ENCODE measurements at regions of chr2 and their contacts with region 1.

Region 1: GRCh38 chr2:172465417-172466334 is 38.3 kb downstream of the ITGA6 start:
- DNase-seq: peak; percentile 72
- H3K4me3 ChIP-seq: peak overlapping the region; percentile 44
- H3K27ac ChIP-seq: no peak overlapping the region
- H3K27me3 ChIP-seq: no peaks in the 10 kb centered on the region
- CTCF ChIP-seq: peak; percentile 86

Region 2: DNA sequence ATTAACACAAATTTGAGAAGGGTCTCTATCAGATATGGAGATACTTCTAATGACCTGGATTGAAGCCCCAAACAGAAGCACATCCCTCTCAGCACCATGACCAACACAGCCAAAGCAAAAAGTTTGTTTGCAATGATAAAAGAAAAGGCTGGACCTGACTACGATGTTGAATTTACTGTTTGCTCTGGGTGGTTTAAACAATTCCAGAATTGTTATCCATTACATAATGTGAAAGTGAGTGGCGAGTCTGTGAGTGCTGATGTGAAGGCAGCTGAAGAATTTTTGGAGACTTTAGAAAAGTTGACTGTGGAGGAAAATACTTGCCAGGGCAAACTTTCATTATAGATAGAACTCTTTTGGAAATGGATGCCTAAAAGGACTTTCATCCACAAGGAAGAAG is 345.6 kb before region 1 on chr2:
- CTCF ChIA-PET with region 1: interaction called, 14 read pairs
- POLR2A ChIA-PET with region 1: no interaction called
- DNase-seq: no peak
- H3K4me3 ChIP-seq: no peak overlapping the region
- H3K27ac ChIP-seq: no peak overlapping the region
- H3K27me3 ChIP-seq: no peaks in the 10 kb centered on the region
- CTCF ChIP-seq: no peak

Region 3: GRCh38 chr2:172179045-172179701 is 286.5 kb before region 1 on chr2:
- CTCF ChIA-PET with region 1: interaction called, 154 read pairs
- POLR2A ChIA-PET with region 1: no interaction called
- DNase-seq: no peak
- H3K4me3 ChIP-seq: no peak overlapping the region
- H3K27ac ChIP-seq: no peak overlapping the region
- H3K27me3 ChIP-seq: no peaks in the 10 kb centered on the region
- CTCF ChIP-seq: no peak

Region 4: DNA sequence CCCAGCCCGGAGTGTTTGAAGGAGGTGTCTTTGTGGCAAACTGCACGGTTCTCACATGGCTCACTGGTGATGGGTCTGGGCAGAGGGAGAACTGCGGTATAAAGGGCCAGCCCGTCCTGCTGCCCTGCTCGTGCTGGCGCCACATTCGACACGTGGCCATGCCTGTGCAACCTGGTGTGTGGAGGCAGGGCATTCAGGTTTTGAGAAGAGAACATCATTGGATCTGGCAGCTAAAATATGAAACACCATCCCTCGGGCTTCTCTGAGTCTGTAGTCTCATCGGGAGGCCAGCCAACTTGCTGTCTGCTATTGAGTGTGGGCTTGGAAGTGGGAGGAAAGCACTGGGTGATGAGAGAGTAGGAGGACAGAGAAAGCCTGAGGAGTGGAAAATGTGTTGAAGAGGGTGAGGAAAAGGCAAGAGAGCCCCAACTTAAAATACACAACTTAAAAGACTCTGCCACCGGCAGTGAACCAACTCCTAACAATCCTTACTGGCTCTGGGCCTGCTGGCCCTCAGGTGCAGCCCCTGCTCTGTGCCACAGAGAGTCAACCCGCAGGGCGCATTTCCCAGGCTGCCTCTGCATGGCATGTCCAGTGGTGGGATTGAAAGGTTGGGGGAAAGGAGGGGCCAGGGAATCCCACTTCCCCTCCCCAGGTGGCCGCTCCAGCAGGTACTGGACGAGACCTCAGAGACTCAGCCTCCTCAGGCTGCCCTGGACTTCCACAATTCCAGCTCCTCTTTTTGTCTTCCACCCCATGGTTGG is 250.3 kb before region 1 on chr2:
- CTCF ChIA-PET with region 1: interaction called, 11 read pairs
- POLR2A ChIA-PET with region 1: no interaction called
- DNase-seq: no peak
- H3K4me3 ChIP-seq: no peak overlapping the region
- H3K27ac ChIP-seq: no peak overlapping the region
- H3K27me3 ChIP-seq: no peaks in the 10 kb centered on the region
- CTCF ChIP-seq: no peak

Region 5: DNA sequence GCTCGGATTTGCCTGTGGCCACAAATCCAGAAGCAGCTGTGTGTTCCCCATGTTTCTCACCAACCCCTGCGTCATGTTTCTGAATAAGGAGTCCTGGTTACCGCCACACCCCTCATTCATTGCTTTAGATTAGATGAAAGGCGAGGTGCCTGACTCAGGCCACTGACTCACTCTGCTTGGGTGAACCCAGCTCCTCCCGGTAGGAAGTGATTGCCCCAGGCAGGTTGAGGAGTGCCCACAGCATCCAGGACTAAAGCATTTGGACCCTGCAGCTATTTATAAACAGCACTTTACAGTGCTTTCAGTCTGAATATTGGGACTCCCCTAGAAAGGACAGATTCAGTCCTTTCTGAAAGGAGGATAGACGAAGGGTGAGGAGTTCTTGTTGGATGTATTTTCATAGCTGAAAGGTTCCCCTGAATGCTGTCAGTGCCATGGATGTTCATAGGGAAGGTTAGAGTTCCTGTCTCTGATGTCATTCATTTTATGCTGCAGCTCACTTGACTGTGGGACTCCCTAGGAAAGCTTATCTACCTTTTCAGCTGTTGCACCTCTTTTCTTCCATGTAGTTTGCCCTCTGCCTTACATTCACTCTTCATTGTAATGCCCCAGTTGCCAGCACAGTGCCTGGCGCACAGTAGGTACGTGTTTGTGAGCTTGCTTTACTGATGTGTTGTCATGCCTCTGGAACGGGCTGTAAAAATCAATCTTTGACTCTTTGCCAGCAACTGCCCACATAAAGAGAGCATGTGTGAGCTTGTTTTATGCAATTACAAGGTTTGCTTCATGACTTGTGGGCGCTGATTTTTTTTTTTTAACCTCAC is 23.4 kb before region 1 on chr2:
- CTCF ChIA-PET with region 1: interaction called, 68 read pairs
- POLR2A ChIA-PET with region 1: interaction called, 5 read pairs
- DNase-seq: peak; percentile 73
- H3K4me3 ChIP-seq: no peak overlapping the region
- H3K27ac ChIP-seq: no peak overlapping the region
- H3K27me3 ChIP-seq: no peaks in the 10 kb centered on the region
- CTCF ChIP-seq: no peak

Measured in AG04450 (cell line).